CD4-positive, alpha-beta T cell (primary cell): ENCODE measurements at regions of chr6 and their contacts with region 1.

Region 1: DNA sequence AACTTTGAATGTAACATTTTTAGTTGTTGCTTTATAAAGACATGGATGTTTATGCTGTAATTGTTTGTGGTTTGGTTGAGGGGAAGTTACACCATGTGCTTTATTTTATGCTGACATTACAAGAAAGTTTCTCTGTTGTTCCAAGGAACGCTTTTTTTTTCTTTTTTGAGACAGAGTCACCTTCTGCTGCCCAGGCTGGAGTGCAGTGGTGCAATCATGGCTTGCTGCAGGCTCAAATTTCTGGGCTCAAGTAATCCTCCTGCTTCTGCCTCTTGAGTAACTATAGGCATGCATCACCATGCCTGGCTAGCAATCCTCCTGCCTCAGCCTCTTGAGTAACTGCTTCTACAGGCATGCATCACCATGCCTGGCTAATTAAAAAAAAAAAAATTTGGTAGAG is 21.0 kb upstream of the IFNGR1 start:
- DNase-seq: peak in 3 of 14 experiments; percentile 55 to 72 (median 59)
- ATAC-seq: no peak
- H3K4me3 ChIP-seq: no peak overlapping the region
- H3K4me3 Mint-ChIP-seq: no peak overlapping the region
- H3K27ac ChIP-seq: no peak overlapping the region
- H3K27ac Mint-ChIP-seq: no peak overlapping the region
- H3K4me1 ChIP-seq: peaks cover 8% of the 10 kb centered on the region
- H3K4me1 Mint-ChIP-seq: peaks cover 7% of the 10 kb centered on the region
- H3K27me3 ChIP-seq: no peaks in the 10 kb centered on the region
- H3K27me3 Mint-ChIP-seq: no peaks in the 10 kb centered on the region
- CTCF ChIP-seq: no peak

Region 2: DNA sequence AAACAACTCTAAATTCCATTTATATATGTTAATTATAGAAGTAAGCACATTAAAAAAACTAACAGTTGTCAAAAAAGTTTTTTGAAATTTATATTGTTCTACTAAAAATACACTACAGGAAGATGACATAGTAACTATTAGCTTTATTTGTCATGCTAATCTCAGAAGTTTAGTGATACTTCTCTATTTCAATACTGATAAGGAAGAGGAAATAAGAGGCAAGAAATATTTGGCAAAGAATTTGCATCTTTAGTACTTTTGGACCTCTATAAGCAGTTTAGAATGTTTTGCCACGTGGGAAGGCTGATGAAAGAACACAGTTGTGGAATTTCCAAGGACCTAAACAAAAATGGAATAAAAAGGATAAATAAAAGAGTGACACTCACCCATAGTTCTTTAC is 33.6 kb before region 1 on chr6:
- CTCF ChIA-PET with region 1: no interaction called
- POLR2A ChIA-PET with region 1: no interaction called
- intact Hi-C with region 1: loop called in 1 of 2 experiments (anchors 5 kb)
- DNase-seq: no peak
- ATAC-seq: no peak
- H3K4me3 ChIP-seq: no peak overlapping the region
- H3K4me3 Mint-ChIP-seq: no peak overlapping the region
- H3K27ac ChIP-seq: no peak overlapping the region
- H3K27ac Mint-ChIP-seq: no peak overlapping the region
- H3K4me1 ChIP-seq: peaks cover 3% of the 10 kb centered on the region
- H3K4me1 Mint-ChIP-seq: peaks cover 26% of the 10 kb centered on the region
- H3K27me3 ChIP-seq: no peaks in the 10 kb centered on the region
- H3K27me3 Mint-ChIP-seq: no peaks in the 10 kb centered on the region
- CTCF ChIP-seq: no peak